HEK293 (cell line): ENCODE measurements at regions of chr19 and their contacts with region 1.

Region 1: DNA sequence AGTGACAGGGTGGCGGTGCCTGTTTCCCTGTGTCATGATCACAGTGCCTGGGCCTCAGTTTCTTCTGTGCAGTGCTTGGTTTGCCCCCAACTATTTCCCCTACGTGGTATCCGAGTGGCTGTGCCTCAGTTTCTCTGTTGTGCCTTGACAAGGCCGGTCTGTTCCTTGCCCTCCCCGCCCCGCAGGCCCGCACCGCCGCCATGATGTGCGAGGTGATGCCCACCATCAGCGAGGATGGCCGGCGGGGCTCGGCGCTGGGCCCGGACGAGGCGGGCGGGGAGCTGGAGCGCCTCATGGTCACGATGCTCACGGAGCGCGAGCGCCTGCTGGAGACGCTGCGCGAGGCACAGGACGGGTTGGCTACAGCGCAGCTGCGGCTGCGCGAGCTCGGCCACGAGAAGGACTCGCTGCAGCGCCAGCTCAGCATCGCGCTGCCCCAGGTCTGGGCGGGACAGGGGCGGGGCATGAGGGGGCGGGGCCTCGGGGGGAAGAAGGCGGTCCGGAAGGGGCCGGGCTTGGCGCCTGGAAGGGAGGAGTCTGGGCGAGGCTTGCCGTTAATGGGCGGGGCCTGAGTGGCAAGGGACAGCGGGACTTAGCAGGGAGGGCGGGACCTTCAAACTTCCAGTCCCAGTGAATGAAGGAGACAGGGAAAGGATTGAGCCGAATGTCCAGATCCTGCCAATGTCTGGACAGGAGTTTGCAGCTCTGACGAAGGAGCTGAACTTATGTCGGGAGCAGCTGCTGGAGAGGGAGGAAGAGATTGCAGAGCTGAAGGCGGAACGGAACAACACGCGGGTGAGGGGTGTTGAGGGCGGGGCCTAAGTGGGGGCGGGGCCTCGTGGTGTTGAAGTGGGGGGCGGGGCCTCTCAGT is 8.6 kb downstream of the PPFIA3 start:
- H3K4me3 ChIP-seq: peak overlapping the region; percentile 53
- H3K27ac ChIP-seq: peak overlapping the region; percentile 60; the same call in 1 of the 2 replicates
- H3K4me1 ChIP-seq: peaks cover 7% of the 10 kb centered on the region
- CTCF ChIP-seq: peak; percentile 85

Region 2: DNA sequence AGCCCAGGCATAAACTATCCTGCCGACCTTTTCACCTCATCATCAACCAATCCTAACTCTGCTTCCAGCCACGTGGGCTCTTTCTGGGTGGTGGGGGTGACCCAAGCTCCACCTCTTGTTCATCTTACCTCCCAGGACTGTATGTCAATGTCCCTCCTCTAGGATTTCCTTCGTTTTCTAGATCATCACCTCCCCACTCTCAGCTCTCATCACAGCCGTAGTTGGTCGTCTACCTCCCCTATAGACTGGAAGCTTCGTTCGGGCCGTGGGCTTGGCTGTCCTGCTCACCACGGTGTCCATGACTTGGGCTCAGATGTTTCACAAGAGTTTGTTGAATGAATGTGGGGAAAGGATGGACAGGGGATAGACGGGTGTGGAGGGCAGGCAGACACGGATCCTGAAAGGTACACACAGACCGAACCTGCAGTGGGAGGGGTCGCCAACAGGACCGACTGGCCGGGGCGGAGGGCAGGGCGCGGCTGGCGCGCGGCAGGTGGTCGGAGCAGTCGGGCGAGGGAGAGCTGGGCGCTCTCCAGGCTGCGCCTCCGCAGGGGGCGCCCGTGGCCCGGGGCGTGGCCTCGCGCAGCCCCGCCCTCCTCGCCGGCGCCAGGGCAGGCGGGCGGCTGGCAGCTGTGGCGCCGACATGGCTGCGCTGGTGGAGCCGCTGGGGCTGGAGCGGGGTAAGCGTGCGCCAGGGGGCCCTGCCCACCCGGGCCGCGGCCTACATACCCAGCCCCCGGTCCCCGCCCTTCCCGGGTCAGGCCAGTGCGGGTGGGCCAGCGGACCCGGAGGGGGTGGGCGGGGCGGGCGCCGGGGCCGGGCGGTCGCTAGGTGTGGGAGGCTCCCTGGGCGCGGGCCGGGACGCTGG is 13.9 kb before region 1 on chr19 and contains the start of gene LIN7B:
- CTCF ChIA-PET with region 1: interaction called, 12 read pairs
- POLR2A ChIA-PET with region 1: interaction called, 18 read pairs
- H3K4me3 ChIP-seq: peak within 1 kb of the TSS; percentile 69
- H3K27ac ChIP-seq: peak within 1 kb of the TSS; percentile 84
- H3K4me1 ChIP-seq: peaks cover 14% of the 10 kb centered on the region
- CTCF ChIP-seq: peak; percentile 31; the same call in 1 of the 2 replicates

Region 3: GRCh38 chr19:49142866-49143335 is 15.0 kb after region 1 on chr19:
- CTCF ChIA-PET with region 1: interaction called, 20 read pairs
- POLR2A ChIA-PET with region 1: interaction called, 17 read pairs
- H3K4me3 ChIP-seq: peak overlapping the region; percentile 29
- H3K27ac ChIP-seq: no peak overlapping the region
- H3K4me1 ChIP-seq: no peaks in the 10 kb centered on the region
- CTCF ChIP-seq: no peak